Dorsolateral prefrontal cortex (tissue), 120 donors: ENCODE measurements at regions of chr17 and their contacts with region 1.

Region 1: DNA sequence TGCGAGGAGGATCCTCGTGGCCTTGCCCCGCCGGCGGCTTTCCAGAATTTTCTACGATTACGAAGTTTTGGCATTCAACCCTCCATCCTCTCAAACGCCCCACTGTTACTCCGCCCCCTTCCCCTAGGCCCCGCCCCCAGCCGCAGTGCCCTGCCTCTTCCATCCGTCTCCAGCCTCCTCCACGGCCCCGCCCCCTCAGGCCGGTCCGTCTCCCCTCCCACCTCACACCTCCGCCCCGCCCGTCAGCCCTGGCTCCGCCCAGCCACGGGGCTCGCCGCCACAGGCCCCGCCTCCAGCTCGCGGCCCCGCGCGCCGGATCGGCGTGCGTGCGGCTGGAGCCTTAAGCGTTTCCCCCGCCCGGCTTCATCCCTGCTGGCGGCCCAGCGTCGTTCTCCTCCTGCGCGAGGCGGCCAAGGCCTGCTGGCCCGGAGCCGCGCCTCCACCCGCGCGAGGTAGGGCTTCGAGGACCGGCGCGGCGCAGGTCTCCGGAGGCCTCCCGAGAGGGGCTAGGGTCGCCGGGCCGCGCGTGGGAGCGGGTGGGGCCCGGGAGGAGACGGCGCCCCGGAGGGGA is at the starts of genes C17orf67 and DGKE:
- DNase-seq: peak; percentile 94 to 99 (median 96)
- H3K4me3 ChIP-seq: peak within 1 kb of the TSS; percentile 61 to 94 (median 83)
- H3K27ac ChIP-seq: peak within 1 kb of the TSS; percentile 54 to 95 (median 88)
- H3K27me3 ChIP-seq: no peaks in the 10 kb centered on the region
- CTCF ChIP-seq: peak in 9 of 56 donors; percentile 6 to 35 (median 22)
- total RNA-seq, gene C17orf67: 0.63 to 10.3 (median 3.4) TPM
- total RNA-seq, gene DGKE: 16.5 to 50.4 (median 34.2) TPM

Region 2: GRCh38 chr17:56679115-56679766 is 154.7 kb before region 1 on chr17:
- intact Hi-C with region 1: no loop called
- DNase-seq: no peak
- H3K4me3 ChIP-seq: peak overlapping the region; percentile 2 to 68 (median 47)
- H3K27ac ChIP-seq: no peak overlapping the region
- H3K27me3 ChIP-seq: peaks cover 0 to 83% (median 25%) of the 10 kb centered on the region in 45 donors
- CTCF ChIP-seq: peak; percentile 40 to 75 (median 62)

Region 3: DNA sequence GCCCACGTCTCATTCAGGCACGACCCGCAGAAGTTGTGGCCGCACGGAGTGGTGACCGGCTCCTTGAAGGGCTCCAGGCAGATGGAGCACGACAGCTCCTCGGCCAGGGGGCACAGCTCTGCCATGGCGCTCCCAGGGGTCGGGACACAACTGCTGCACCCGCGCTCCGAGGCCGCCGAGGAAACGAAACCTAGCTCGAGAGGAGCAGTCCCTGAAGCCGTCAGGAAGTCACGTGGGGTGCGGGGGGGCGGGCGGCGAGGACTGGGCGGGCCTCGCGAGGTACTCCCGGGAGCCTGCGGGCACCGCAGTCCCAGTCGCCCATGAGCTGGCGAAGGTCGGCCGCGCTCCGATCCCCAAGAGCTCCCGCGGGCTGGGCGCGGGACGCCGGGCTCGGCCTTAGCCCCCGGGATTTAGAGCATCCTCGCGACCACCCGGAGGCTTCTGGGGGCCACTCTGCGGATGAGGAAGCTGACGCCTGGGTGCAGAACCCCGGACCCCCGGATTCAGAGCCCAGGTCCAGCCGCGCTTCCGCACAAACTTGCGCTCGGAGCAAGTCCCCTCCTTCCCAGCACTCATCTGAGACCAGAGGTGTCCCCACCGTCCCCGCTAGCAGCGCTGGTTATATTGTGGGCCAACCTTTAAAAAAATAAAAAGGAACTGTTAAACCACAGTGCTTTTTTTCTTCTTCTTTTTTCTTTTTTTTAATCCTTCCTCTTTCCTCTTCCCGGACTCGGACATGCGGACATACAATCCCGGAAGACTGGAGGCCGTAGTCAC is 80.2 kb after region 1 on chr17 and contains the start of gene TRIM25:
- intact Hi-C with region 1: loop called in 1 of 2 experiments (anchors 5 kb)
- DNase-seq: peak; percentile 60 to 86 (median 73)
- H3K4me3 ChIP-seq: peak within 1 kb of the TSS; percentile 64 to 91 (median 81)
- H3K27ac ChIP-seq: peak within 1 kb of the TSS in 55 of 59 donors; percentile 23 to 89 (median 77)
- H3K27me3 ChIP-seq: no peaks in the 10 kb centered on the region
- CTCF ChIP-seq: peak in 5 of 56 donors; percentile 5 to 19 (median 14)
- total RNA-seq, gene TRIM25: 10.8 to 56.1 (median 28.9) TPM

Region 4: GRCh38 chr17:56960596-56961538 is 127.0 kb after region 1 on chr17 and contains the start of gene COIL:
- intact Hi-C with region 1: loop called in 1 of 2 experiments (anchors 2 kb)
- DNase-seq: peak; percentile 88 to 96 (median 94)
- H3K4me3 ChIP-seq: peak within 1 kb of the TSS; percentile 49 to 91 (median 76)
- H3K27ac ChIP-seq: peak within 1 kb of the TSS in 57 of 59 donors; percentile 21 to 97 (median 84)
- H3K27me3 ChIP-seq: no peaks in the 10 kb centered on the region
- CTCF ChIP-seq: peak; percentile 96 to 100 (median 99)
- total RNA-seq, gene COIL: 7.0 to 17.4 (median 13.3) TPM

Region 5: DNA sequence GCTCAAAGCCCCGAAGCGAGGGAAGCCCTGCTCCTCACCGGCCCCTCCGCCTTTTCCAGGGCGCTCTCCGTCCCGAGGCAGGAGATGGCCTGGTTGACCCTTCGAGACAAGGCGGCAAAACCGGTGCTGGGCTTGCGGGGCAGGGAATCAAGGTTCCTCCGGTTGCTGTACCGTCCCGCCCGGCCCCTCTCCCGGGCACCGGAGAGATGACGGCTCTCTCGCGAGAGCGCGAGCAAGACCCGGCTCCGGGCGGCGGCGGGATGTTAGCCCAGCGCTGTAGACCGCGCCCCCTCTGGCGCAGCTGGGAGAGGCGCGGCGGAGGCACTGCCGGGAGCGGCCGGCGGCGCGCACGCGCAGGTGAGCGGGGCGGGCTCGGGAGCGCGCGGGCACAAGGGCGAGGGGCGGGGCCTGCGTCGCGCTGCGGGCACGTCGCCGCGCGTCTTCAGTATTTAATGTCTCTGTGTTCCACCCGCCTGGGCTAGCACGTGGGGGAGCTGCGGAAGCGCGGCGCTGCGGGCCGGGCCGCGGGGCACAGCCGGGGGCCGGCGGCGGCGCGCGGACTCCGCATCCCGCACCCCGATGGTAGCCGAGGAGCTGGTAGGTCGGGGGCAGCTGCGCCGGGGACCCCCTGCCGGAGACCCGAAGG is 251.0 kb after region 1 on chr17 and contains the start of gene AKAP1:
- intact Hi-C with region 1: loop called (anchors 5 to 10 kb)
- DNase-seq: peak; percentile 81 to 97 (median 91)
- H3K4me3 ChIP-seq: peak within 1 kb of the TSS; percentile 62 to 99 (median 90)
- H3K27ac ChIP-seq: peak within 1 kb of the TSS; percentile 72 to 99 (median 95)
- H3K27me3 ChIP-seq: no peaks in the 10 kb centered on the region
- CTCF ChIP-seq: peak in 47 of 56 donors; percentile 8 to 70 (median 47)
- total RNA-seq, gene AKAP1: 37.5 to 77.9 (median 57.2) TPM